ENCODE measurements at regions of chr1 and their contacts with region 1.

Region 1: DNA sequence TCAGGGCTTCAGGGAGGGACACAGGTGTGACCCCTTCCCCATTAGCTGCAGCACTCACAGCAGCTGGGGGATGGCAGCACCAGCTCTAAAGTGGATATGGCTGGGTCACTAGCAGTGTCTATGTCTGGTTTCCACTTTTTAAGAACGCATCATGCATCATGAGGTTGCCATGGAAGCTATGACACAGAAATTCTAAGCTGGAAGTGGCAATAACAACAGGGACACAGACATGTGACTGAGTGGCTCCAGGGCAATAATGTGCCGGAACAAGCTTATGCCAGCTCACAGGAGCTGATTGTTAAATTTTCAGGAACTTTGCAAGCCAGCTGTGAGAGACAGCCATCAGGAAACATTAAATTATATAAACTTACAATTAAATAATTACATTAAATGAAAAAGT is 51.2 kb upstream of the NFASC start:
- DNase-seq: peak; percentile 31
- ATAC-seq: peak; percentile 22; the same call in 1 of the 2 replicates
- H3K4me3 ChIP-seq: no peak overlapping the region
- H3K27ac ChIP-seq: no peak overlapping the region
- H3K4me1 ChIP-seq: no peaks in the 10 kb centered on the region
- H3K27me3 ChIP-seq: peaks cover 81% of the 10 kb centered on the region
- CTCF ChIP-seq: no peak

Region 2: DNA sequence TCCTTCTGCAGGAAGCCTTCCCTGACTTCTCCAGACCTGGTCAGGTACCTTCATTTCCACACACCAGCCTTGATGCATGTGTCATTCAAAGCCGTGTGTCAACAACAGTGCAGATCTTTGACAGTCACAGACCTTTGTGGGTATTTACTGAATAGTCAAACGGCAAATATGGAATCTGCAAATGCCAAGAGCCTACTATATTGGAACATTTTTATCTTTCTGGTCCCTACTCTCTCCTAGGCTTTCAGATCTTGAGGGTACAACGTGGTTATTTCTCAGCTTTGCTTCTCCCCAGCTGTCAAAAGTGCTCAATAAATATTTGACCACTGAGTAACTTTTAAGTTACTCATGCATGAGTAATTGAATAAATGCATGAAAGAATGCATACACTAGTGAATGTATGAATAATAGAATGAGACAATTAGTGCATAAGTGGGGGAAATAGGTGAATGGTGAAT is 227.9 kb before region 1 on chr1:
- CTCF ChIA-PET with region 1: no interaction called
- POLR2A ChIA-PET with region 1: no interaction called
- intact Hi-C with region 1: no loop called
- DNase-seq: peak; percentile 99
- ATAC-seq: peak; percentile 85
- H3K4me3 ChIP-seq: no peak overlapping the region; the same call in 1 of the 2 replicates
- H3K27ac ChIP-seq: peak overlapping the region; percentile 78
- H3K4me1 ChIP-seq: peaks cover 35% of the 10 kb centered on the region
- H3K27me3 ChIP-seq: no peaks in the 10 kb centered on the region
- CTCF ChIP-seq: no peak

Region 3: GRCh38 chr1:204791453-204792353 is 27.8 kb before region 1 on chr1:
- CTCF ChIA-PET with region 1: interaction called, 17 read pairs
- POLR2A ChIA-PET with region 1: no interaction called
- intact Hi-C with region 1: no loop called
- DNase-seq: peak; percentile 83
- ATAC-seq: peak; percentile 86
- H3K4me3 ChIP-seq: no peak overlapping the region
- H3K27ac ChIP-seq: no peak overlapping the region
- H3K4me1 ChIP-seq: no peaks in the 10 kb centered on the region
- H3K27me3 ChIP-seq: peaks cover 28% of the 10 kb centered on the region
- CTCF ChIP-seq: peak; percentile 99

Measured in PC-3 (cell line).